AG04450 (cell line): ENCODE measurements at regions of chr9 and their contacts with region 1.

Region 1: GRCh38 chr9:127244609-127245601 is 19.7 kb upstream of the GARNL3 start:
- DNase-seq: peak; percentile 78
- H3K4me3 ChIP-seq: peak overlapping the region; percentile 86
- H3K27ac ChIP-seq: no peak overlapping the region
- H3K27me3 ChIP-seq: no peaks in the 10 kb centered on the region
- CTCF ChIP-seq: no peak

Region 2: GRCh38 chr9:127083138-127083980 is 161.5 kb before region 1 on chr9:
- CTCF ChIA-PET with region 1: no interaction called
- POLR2A ChIA-PET with region 1: no interaction called
- DNase-seq: no peak
- H3K4me3 ChIP-seq: no peak overlapping the region
- H3K27ac ChIP-seq: no peak overlapping the region
- H3K27me3 ChIP-seq: no peaks in the 10 kb centered on the region
- CTCF ChIP-seq: no peak

Region 3: GRCh38 chr9:127214421-127215267 is 30.3 kb before region 1 on chr9:
- CTCF ChIA-PET with region 1: no interaction called
- POLR2A ChIA-PET with region 1: no interaction called
- DNase-seq: peak; percentile 66
- H3K4me3 ChIP-seq: no peak overlapping the region
- H3K27ac ChIP-seq: peak overlapping the region; percentile 61
- H3K27me3 ChIP-seq: peaks cover 22% of the 10 kb centered on the region
- CTCF ChIP-seq: peak; percentile 77

Region 4: DNA sequence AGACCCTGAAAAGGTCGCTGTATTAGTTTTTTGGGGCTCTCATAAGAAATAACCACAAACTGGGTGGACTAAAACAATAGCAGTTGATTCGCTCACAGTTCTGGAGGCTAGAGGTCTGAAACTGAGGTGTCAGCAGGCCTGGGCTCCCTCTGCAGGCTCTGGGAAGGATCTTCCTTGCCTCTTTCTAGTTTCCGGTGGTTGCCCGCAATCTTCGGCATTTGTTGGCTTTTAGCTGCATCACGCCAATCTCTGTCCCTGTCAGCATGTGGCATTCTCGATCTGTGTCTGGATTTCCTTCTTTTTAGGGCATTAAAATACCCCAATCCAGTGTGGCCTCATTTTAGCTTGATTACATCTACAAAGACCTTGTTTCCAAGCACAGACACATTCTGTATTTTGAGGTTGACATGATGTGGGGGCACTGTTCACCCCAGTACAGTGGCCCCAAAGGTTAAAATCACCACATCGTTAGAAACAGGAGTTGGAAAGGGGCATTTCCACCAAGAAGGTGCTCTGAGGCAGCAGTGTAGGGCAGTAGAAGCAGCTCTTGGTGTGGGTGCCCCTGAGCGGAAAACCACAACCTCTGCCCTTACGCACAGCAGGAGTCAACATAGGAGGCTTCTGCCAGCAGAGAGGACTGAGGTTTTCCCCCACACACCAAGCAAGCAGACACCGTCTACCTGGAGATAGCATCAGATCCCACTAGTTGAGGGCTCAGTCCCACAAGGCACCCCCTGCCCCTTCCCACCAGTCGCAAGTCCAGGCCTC is 192.8 kb after region 1 on chr9:
- CTCF ChIA-PET with region 1: interaction called, 12 read pairs
- POLR2A ChIA-PET with region 1: no interaction called
- DNase-seq: no peak
- H3K4me3 ChIP-seq: no peak overlapping the region
- H3K27ac ChIP-seq: no peak overlapping the region
- H3K27me3 ChIP-seq: no peaks in the 10 kb centered on the region
- CTCF ChIP-seq: peak; percentile 19; the same call in 1 of the 2 replicates